ENCODE measurements at regions of chr3 and their contacts with region 1.

Region 1: GRCh38 chr3:47475570-47476329 is at the start of gene SCAP:
- DNase-seq: peak; percentile 95
- ATAC-seq: peak; percentile 95
- H3K4me3 Mint-ChIP-seq: peak within 1 kb of the TSS; percentile 91
- H3K27ac Mint-ChIP-seq: peak within 1 kb of the TSS; percentile 89
- H3K4me1 Mint-ChIP-seq: peaks cover 36% of the 10 kb centered on the region
- H3K27me3 Mint-ChIP-seq: no peaks in the 10 kb centered on the region
- CTCF ChIP-seq: peak; percentile 98
- total RNA-seq, gene SCAP: 82.5 and 84.3 TPM in 2 replicates

Region 2: GRCh38 chr3:47096959-47097358 is 378.8 kb before region 1 on chr3:
- CTCF ChIA-PET with region 1: no interaction called
- POLR2A ChIA-PET with region 1: no interaction called
- intact Hi-C with region 1: no loop called
- DNase-seq: no peak
- ATAC-seq: no peak
- H3K4me3 Mint-ChIP-seq: no peak overlapping the region
- H3K27ac Mint-ChIP-seq: no peak overlapping the region
- H3K4me1 Mint-ChIP-seq: no peaks in the 10 kb centered on the region
- H3K27me3 Mint-ChIP-seq: no peaks in the 10 kb centered on the region
- CTCF ChIP-seq: no peak

Region 3: DNA sequence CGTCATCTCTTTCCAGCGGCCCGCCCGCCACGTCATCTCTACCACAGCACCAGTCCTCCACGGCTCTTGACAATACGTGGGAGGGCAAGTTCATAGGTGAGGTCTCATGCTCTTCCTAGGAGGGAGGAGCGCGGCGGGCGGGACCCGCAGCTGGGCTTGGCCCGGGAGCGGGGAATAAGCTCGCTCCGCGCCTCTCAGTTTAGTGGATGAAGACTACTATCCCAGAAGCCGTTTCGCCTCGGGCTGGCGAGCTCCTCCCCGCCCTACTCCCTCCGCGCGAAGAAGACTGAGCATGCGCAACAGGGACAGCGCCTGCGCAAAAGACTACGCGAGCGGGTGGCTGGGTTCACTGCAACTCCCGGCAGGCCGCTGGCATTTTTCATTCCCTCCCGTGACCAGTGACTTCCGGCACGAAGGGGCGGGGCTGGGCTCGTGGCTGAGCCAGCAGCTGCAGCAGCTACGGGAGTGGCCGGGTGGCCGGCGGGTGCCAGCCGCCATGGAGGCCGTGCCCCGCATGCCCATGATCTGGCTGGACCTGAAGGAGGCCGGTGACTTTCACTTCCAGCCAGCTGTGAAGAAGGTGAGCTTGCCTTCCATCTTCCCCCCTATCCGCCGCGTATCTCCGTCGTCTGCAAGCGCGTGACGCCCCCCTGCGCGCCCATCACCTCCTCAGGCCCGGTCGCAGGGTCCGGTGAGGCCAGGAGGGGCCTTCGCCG is 95.0 kb before region 1 on chr3 and contains the start of gene PTPN23:
- CTCF ChIA-PET with region 1: no interaction called
- POLR2A ChIA-PET with region 1: interaction called, 10 read pairs
- intact Hi-C with region 1: loop called (anchors 1 kb)
- DNase-seq: peak; percentile 98
- ATAC-seq: peak; percentile 80
- H3K4me3 Mint-ChIP-seq: peak within 1 kb of the TSS; percentile 95
- H3K27ac Mint-ChIP-seq: peak within 1 kb of the TSS; percentile 96
- H3K4me1 Mint-ChIP-seq: peaks cover 49% of the 10 kb centered on the region
- H3K27me3 Mint-ChIP-seq: no peaks in the 10 kb centered on the region
- CTCF ChIP-seq: no peak
- total RNA-seq, gene PTPN23: 44.0 and 50.3 TPM in 2 replicates

Region 4: DNA sequence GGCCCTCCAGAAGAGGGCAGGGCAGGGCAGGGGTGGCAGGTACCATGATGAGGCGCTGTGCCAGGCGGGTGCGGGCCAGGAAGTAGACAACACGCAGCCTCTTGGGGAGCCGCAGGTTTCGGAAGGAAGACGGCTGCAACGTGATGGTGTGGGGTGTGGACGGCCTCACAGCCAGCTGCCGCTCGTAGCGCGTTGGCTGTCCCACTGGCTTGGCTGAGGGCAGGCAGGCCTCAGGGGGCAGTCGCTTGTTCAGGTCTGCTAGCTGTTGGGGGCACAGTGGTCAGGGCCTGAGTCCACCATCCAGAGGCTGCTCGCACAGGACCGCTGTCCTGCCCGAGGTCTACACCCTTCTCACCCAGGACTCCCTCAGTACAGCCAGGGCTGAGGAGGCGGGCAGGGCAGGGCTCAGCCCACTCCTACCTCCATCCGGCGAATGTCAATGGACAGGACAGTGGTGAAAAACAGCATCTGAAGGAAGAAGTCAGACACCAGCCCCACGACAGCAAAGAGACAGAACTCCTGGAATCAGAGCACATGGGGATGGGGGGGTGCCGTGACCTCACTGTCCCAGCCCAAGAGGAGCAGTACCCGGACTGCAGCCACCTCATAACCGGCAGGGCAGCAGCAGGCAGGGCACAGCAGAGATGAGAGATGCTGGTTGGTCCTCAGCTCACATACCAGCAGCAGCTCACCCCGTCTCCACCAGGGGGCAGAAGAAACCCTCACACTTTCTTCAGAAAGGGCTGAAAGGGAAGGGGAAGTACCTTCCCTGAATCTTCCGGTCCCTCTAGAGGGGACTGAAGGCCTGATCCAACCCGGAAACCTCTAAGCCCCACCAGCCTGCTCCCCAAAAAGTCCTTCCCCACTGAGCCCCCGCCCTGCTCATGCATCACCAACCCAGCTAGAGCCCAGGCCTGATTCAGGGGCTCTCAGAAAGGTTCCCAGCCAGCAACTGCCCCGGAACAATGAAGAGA is 55.0 kb before region 1 on chr3:
- CTCF ChIA-PET with region 1: interaction called, 24 read pairs
- POLR2A ChIA-PET with region 1: interaction called, 11 read pairs
- intact Hi-C with region 1: loop called (anchors 1 kb)
- DNase-seq: peak; percentile 75
- ATAC-seq: peak; percentile 98
- H3K4me3 Mint-ChIP-seq: peak overlapping the region; percentile 75
- H3K27ac Mint-ChIP-seq: peak overlapping the region; percentile 98
- H3K4me1 Mint-ChIP-seq: peaks cover 16% of the 10 kb centered on the region
- H3K27me3 Mint-ChIP-seq: no peaks in the 10 kb centered on the region
- CTCF ChIP-seq: no peak

Region 5: DNA sequence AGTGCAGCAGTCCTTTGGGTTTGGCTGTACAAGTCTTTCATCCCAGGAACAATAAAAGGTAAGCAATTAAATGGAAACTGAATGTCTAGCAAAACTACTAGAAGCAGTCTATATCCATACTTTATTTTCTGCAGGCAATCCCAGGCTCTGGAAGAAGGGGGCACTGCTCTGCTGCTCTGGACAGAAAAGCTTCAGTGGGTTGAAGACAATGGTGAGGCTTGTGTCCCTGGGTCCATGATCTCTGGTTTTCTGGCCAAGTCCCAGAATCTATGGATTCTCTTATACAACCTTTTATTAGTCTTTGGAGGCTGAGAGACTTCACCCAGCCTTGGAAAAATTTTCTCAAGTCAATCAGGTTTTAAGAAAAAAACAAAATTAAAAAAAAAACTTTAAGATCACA is 35.6 kb before region 1 on chr3:
- CTCF ChIA-PET with region 1: no interaction called
- POLR2A ChIA-PET with region 1: no interaction called
- intact Hi-C with region 1: loop called (anchors 5 kb)
- DNase-seq: no peak
- ATAC-seq: no peak
- H3K4me3 Mint-ChIP-seq: no peak overlapping the region
- H3K27ac Mint-ChIP-seq: no peak overlapping the region
- H3K4me1 Mint-ChIP-seq: no peaks in the 10 kb centered on the region
- H3K27me3 Mint-ChIP-seq: no peaks in the 10 kb centered on the region
- CTCF ChIP-seq: no peak

Region 6: GRCh38 chr3:47491186-47491585 is 15.4 kb after region 1 on chr3:
- CTCF ChIA-PET with region 1: interaction called, 3 read pairs
- POLR2A ChIA-PET with region 1: interaction called, 20 read pairs
- intact Hi-C with region 1: no loop called
- DNase-seq: no peak
- ATAC-seq: peak; percentile 28
- H3K4me3 Mint-ChIP-seq: peak overlapping the region; percentile 15
- H3K27ac Mint-ChIP-seq: peak overlapping the region; percentile 66
- H3K4me1 Mint-ChIP-seq: peaks cover 34% of the 10 kb centered on the region
- H3K27me3 Mint-ChIP-seq: no peaks in the 10 kb centered on the region
- CTCF ChIP-seq: no peak

Region 7: DNA sequence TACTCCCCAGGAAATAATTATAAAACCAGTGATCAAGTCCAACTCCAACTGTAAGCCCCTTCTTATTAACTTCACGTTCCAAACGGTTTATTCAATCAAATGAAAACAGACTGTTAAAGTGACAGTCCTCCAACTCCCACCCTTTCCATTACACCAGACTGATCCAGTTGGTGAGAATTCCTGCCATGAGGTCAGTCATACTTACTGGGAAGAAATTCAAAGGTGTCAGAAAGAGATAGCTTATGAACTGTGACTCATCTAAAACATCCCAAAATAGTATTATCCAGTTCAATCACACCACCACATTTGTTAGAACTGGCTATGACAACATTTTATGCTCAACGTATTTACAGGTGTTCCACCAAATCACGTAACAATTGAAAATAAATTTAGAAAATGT is 286.5 kb after region 1 on chr3:
- CTCF ChIA-PET with region 1: no interaction called
- POLR2A ChIA-PET with region 1: no interaction called
- intact Hi-C with region 1: no loop called
- DNase-seq: no peak
- ATAC-seq: no peak
- H3K4me3 Mint-ChIP-seq: no peak overlapping the region
- H3K27ac Mint-ChIP-seq: no peak overlapping the region
- H3K4me1 Mint-ChIP-seq: peaks cover 3% of the 10 kb centered on the region
- H3K27me3 Mint-ChIP-seq: no peaks in the 10 kb centered on the region
- CTCF ChIP-seq: no peak